A549 (cell line): ENCODE measurements at regions of chr7 and their contacts with region 1.

Region 1: DNA sequence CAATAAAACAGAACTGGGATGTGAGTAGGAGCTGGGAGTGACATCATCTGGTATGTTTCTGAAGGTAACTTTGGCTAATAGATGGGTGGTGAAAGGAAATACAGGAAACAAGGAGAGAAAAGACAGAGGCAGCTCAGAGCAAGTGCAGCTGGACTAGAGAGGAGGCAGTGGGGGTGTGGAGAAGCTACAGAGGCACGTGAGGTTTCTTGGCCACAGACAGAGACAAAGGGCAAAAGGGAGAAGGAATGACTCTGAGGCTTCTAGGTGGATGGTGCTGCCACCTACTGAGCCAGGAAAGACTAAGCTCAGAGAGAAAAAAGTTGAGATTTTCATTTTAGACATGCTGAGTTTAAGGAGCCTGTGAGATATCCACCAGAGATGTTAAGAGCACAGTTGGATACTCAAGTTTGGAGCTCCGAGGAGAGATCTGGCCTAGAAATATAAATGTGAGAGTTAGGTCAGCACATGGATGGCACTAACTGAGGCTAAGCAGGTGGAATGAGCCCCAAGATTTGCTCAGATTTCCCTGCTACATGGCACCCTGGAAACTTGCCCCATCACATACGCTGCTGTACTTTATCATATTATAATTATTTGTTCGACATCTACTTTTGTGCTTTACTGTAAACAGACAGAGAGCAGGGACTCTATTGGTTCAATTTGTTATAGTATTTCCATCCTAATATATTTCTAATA is 293.0 kb upstream of the IMMP2L start:
- DNase-seq: peak; percentile 23 to 58
- ATAC-seq: peak; percentile 86 to 95
- H3K4me3 ChIP-seq: no peak overlapping the region
- H3K27ac ChIP-seq: no peak overlapping the region
- H3K4me1 ChIP-seq: peaks cover 13% of the 10 kb centered on the region; the same call in 2 of the 3 replicates
- CTCF ChIP-seq: peak; percentile 64
- EP300 ChIP-seq: no peak
- POLR2A ChIP-seq: no peak
- RAD21 ChIP-seq: peak; percentile 51 to 56

Region 2: GRCh38 chr7:111752022-111752582 is 103.2 kb before region 1 on chr7:
- CTCF ChIA-PET with region 1: interaction called, 17 read pairs
- POLR2A ChIA-PET with region 1: no interaction called
- DNase-seq: peak; percentile 52
- ATAC-seq: peak; percentile 91 to 97
- H3K4me3 ChIP-seq: no peak overlapping the region
- H3K27ac ChIP-seq: no peak overlapping the region
- H3K4me1 ChIP-seq: no peaks in the 10 kb centered on the region
- CTCF ChIP-seq: peak; percentile 84
- EP300 ChIP-seq: no peak
- POLR2A ChIP-seq: no peak
- RAD21 ChIP-seq: peak; percentile 56 to 67

Region 3: GRCh38 chr7:111815354-111815753 is 40.0 kb before region 1 on chr7:
- CTCF ChIA-PET with region 1: no interaction called
- POLR2A ChIA-PET with region 1: no interaction called
- DNase-seq: no peak
- ATAC-seq: no peak
- H3K4me3 ChIP-seq: no peak overlapping the region
- H3K27ac ChIP-seq: no peak overlapping the region
- H3K4me1 ChIP-seq: no peaks in the 10 kb centered on the region
- CTCF ChIP-seq: no peak
- EP300 ChIP-seq: no peak
- POLR2A ChIP-seq: no peak
- RAD21 ChIP-seq: no peak

Region 4: DNA sequence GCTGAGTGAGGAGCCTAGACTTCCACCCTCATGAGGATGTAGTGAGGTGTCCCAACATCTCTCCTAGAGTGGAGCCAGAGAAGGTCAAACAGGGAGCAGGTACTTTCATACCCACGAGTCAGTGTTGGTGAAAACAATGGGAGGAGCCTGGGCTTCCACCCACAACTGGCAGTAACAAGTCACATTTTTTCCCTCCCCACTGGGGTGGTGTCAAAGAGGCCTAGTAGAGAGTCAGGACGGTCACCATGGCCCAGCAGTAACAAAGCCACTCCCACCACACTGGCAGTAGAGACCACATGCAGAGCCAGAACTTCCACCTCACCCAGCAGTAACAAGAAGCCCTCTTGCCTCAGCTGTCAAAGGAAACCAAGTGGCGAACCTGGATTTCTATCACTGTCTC is 12.8 kb before region 1 on chr7:
- CTCF ChIA-PET with region 1: interaction called, 13 read pairs
- POLR2A ChIA-PET with region 1: no interaction called
- DNase-seq: no peak
- ATAC-seq: no peak; a peak in 1 of 6 replicates
- H3K4me3 ChIP-seq: no peak overlapping the region
- H3K27ac ChIP-seq: no peak overlapping the region
- H3K4me1 ChIP-seq: no peaks in the 10 kb centered on the region
- CTCF ChIP-seq: no peak
- EP300 ChIP-seq: no peak
- POLR2A ChIP-seq: no peak
- RAD21 ChIP-seq: no peak